A549 (cell line): ENCODE measurements at regions of chr11 and their contacts with region 1.

Region 1: GRCh38 chr11:123429913-123430720 is at the start of gene GRAMD1B:
- DNase-seq: peak; percentile 68 to 73
- ATAC-seq: peak; percentile 75 to 81
- H3K4me3 ChIP-seq: peak within 1 kb of the TSS; percentile 93
- H3K27ac ChIP-seq: peak within 1 kb of the TSS; percentile 94 to 95
- H3K4me1 ChIP-seq: peaks cover 14% of the 10 kb centered on the region; the same call in 2 of the 3 replicates
- CTCF ChIP-seq: peak; percentile 0; the same call in 1 of the 3 replicates
- EP300 ChIP-seq: no peak
- POLR2A ChIP-seq: no peak
- RAD21 ChIP-seq: no peak
- polyA plus RNA-seq, gene GRAMD1B: 108 and 113 TPM in 2 replicates

Region 2: GRCh38 chr11:123413636-123414035 is 16.5 kb before region 1 on chr11:
- CTCF ChIA-PET with region 1: interaction called, 38 read pairs
- POLR2A ChIA-PET with region 1: interaction called, 4 read pairs
- DNase-seq: no peak
- ATAC-seq: no peak
- H3K4me3 ChIP-seq: no peak overlapping the region
- H3K27ac ChIP-seq: no peak overlapping the region; a peak in 1 of 6 replicates
- H3K4me1 ChIP-seq: peaks cover 12% of the 10 kb centered on the region
- CTCF ChIP-seq: no peak
- EP300 ChIP-seq: no peak
- POLR2A ChIP-seq: no peak
- RAD21 ChIP-seq: no peak